GM18951 (cell line): ENCODE measurements at regions of chr19 and their contacts with region 1.

Region 1: DNA sequence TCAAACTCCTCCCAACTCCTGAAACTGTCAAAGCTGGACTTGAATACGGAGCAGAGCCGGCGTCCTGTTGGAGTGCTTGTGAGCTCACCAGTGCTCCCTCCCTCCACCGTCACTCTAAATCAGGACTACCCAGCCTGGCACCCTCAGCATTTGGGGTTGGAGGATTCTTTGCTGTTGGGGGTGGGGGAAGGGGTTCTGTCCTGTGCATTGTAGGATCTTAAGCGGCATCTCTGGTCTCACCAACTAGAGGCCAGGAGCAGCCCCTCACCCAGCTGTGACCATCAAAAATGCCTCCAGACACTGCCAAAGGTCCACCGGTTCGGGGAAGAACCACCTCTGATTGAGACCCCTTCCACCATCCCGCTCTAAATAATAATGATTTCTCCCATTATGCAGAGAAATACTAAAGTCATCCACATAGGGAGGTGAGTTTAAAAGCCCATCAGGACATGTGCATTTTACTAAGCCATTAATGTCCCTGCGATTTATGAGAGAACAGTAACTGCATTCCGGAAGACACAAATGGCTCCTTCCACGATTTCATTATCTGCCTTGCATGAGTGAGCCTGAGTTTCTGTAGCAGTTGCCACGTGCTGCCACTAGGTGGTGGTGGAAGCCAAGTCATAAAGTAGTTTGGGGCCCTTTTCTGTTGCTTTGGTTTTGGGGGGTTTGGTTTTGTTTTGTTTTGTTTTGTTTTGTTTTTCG is 16.1 kb upstream of the USP29 start:
- POLR2A ChIP-seq: no peak

Region 2: DNA sequence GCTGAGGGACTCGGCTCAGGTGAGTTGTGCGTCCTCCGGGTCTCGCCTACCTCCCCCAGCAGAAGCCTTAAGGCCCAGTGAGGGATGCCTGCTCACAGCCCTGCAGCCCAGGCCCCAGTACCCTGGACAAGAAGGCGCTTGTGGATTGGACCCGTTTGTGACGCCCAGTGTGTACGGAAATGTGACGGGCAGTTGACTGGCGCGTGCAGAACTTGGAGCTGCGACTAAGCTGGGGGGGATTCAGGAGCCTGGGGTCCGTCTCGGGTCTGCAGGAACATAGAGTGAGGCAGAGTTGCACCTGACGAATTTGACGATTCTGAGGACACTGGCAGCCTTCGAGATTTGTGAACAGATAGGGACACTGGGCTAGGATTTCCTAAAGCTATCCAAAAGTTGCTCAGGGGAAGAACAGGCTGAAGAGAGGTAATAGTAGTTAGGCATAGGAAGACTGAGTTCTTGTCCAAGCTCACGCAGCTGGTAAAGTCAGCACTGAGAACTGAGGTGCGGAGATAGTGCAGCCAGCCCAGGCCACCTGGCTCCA is 578.6 kb after region 1 on chr19:
- in situ Hi-C with region 1: loop called (anchors 25 kb)
- POLR2A ChIP-seq: no peak